Dorsolateral prefrontal cortex (tissue), 120 donors: ENCODE measurements at regions of chr6 and their contacts with region 1.

Region 1: DNA sequence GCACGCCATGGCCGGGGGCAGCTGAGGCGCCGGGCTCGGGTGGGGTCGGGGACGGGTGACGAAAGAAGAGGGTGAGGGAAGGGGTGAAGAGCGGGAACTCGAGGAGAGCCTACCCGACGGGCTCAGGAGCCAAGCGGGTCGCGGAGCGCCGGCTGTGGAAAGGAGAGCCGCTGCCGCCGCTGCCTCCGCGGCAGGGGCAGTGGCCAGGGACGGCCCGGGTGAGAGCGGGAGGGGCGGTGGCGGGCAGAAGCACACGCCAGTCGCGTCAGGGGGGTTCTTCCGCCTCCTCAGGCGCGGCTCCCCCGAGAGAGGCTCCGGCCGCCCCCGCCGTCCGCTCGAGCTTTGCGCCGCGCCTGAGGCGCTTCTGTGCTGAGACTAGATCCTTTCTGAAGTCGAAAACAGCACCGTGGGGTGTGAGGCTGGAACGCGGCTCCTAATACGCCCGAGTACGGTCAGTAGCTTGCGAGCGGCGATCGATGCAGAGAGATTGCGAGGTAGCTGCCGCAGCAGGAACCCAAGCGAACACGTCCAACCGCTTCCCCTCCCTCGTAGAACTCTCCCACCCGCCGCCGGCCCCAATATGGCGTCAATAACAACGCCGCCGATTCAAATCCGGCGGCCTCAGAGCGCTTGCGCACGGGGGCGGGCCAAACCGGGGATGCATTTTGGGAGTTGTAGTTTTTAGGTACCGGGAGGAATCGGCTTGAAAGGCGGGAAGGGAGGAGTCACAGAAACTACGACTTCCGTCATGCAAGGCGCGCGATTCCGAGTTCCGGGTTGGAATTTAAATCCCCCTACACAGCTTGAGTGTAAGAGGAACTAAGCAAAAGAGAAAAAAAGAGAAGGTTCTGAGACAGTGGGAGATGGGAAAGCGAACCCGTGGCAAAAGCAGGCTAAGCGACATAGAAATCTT is at the start of gene AKIRIN2:
- DNase-seq: peak; percentile 93 to 97 (median 96)
- H3K4me3 ChIP-seq: peak within 1 kb of the TSS; percentile 61 to 98 (median 93)
- H3K27ac ChIP-seq: peak within 1 kb of the TSS; percentile 79 to 100 (median 98)
- H3K27me3 ChIP-seq: no peaks in the 10 kb centered on the region
- CTCF ChIP-seq: peak in 9 of 56 donors; percentile 3 to 41 (median 13)
- total RNA-seq, gene AKIRIN2: 38.8 to 78.6 (median 58.0) TPM

Region 2: DNA sequence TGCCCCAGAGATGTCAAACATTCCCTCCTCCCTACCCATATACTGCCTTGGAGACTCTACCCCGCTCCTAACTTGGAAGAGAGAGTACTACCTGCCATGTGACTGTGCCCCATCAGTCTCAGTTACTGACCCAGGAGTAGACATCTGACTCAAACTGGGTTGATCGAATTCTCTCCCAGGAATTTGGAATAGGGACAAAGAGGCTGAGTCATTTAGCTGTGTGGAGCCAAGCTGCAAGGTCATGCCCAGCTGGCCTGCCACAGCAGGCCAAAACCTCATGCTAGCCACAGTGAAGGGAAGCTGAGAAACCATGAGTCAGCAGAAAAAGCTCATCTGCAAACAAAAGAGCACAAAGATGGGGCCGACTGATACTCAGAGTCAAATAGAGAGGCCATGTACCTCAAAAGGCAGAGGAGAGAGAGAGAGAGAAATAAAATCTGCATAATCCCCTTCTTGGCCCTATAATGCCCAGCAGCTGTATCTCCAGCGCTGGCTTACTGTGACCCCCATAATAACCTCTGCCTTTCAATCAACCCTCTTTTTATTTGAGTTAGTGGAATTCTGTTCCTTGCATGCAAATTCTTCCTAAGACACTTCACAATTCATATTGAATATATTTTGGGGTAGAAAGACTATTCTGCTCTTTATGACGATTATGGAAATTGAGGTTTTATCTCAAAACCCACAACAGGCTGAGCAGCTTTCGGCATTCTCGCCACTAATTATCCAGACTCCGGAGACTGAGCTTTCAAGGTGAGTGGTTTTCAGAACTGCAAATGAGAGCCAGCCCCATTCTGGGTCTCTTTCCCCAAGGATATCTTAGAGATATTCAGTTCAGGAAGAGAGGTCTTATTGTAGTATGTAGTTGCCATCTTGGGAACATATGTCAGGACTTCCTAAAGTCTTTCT is 21.5 kb after region 1 on chr6:
- intact Hi-C with region 1: loop called in 1 of 2 experiments (anchors 2 kb)
- DNase-seq: peak; percentile 22 to 86 (median 78)
- H3K4me3 ChIP-seq: peak overlapping the region in 4 of 59 donors; percentile 12 to 23 (median 20)
- H3K27ac ChIP-seq: peak overlapping the region in 30 of 59 donors; percentile 0 to 77 (median 38)
- H3K27me3 ChIP-seq: no peaks in the 10 kb centered on the region
- CTCF ChIP-seq: peak in 9 of 56 donors; percentile 7 to 24 (median 19)